H1 (cell line): ENCODE measurements at regions of chr2 and their contacts with region 1.

Region 1: GRCh38 chr2:162301151-162301804 is 17.2 kb downstream of the IFIH1 start:
- DNase-seq: no peak
- H3K4me3 ChIP-seq: no peak overlapping the region
- H3K27ac ChIP-seq: no peak overlapping the region
- H3K4me1 ChIP-seq: no peaks in the 10 kb centered on the region
- H3K27me3 ChIP-seq: no peaks in the 10 kb centered on the region
- CTCF ChIP-seq: peak in 2 of 3 experiments; percentile 62 to 72; a peak in 3 of 4 replicates
- EP300 ChIP-seq: no peak
- POLR2A ChIP-seq: no peak
- RAD21 ChIP-seq: peak; percentile 59 to 63

Region 2: DNA sequence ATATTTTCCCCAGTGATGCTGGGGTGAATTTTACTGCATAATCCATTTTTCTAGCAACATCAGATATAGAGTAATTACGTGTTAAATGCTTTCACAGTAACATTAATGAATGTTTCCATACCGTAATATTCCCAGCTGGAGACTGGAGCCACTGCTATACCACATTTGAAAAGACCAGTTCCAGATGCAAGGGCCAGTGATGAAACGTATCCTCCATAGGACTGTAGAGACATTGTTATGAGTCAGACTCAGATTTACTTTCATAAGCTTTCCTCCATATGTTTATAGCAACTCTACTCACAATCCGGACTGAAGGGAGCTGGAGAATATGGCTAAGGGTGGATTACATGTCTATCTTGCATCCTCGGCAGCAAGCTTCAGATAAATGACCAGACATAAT is 126.5 kb before region 1 on chr2:
- CTCF ChIA-PET with region 1: interaction called, 12 read pairs
- POLR2A ChIA-PET with region 1: no interaction called
- DNase-seq: no peak
- H3K4me3 ChIP-seq: no peak overlapping the region
- H3K27ac ChIP-seq: no peak overlapping the region
- H3K4me1 ChIP-seq: peaks cover 0 to 3% (median 1%) of the 10 kb centered on the region in 4 experiments; a peak in 2 of 7 replicates
- H3K27me3 ChIP-seq: peaks cover 0 to 1% (median 0%) of the 10 kb centered on the region in 4 experiments; a peak in 1 of 7 replicates
- CTCF ChIP-seq: no peak
- EP300 ChIP-seq: no peak
- POLR2A ChIP-seq: no peak
- RAD21 ChIP-seq: no peak

Region 3: GRCh38 chr2:162232671-162233070 is 68.6 kb before region 1 on chr2:
- CTCF ChIA-PET with region 1: interaction called, 13 read pairs
- POLR2A ChIA-PET with region 1: no interaction called
- DNase-seq: no peak
- H3K4me3 ChIP-seq: no peak overlapping the region
- H3K27ac ChIP-seq: no peak overlapping the region
- H3K4me1 ChIP-seq: no peaks in the 10 kb centered on the region
- H3K27me3 ChIP-seq: no peaks in the 10 kb centered on the region
- CTCF ChIP-seq: no peak
- EP300 ChIP-seq: no peak
- POLR2A ChIP-seq: no peak
- RAD21 ChIP-seq: no peak

Region 4: DNA sequence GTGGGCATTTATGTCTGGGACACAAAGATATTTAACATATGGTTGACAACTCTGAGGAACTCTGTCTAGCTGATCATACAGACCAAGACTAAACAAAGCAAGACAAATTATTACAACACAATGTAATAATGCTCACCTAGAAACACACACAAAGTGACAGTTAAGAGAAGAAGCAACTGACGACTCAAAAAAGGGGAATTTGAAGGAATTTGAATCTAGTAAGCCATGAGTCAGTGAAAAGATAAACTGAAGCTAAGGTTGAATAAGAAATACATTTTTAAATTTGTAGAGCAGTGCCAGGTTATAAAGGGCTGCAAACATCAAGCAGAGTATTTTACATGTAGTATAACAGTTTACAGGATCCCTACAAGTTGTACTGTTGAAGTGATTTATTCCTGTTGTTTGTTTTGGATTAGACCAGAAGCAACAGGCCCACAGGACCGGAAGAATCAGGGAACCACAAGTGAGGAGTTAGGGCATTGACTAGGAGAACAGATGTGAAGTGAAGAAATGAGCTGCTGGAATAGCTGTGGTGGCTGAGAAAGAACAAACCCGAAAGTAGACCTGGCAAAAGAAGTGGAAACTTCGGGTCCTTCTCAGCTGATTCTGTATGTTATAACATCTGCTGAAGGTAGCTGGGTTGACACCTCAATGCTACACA is 18.4 kb before region 1 on chr2:
- CTCF ChIA-PET with region 1: interaction called, 55 read pairs
- POLR2A ChIA-PET with region 1: no interaction called
- DNase-seq: no peak
- H3K4me3 ChIP-seq: no peak overlapping the region
- H3K27ac ChIP-seq: no peak overlapping the region
- H3K4me1 ChIP-seq: no peaks in the 10 kb centered on the region
- H3K27me3 ChIP-seq: no peaks in the 10 kb centered on the region
- CTCF ChIP-seq: no peak
- EP300 ChIP-seq: no peak
- POLR2A ChIP-seq: no peak
- RAD21 ChIP-seq: no peak

Region 5: GRCh38 chr2:162327134-162327769 is 26.0 kb after region 1 on chr2:
- CTCF ChIA-PET with region 1: interaction called, 11 read pairs
- POLR2A ChIA-PET with region 1: no interaction called
- DNase-seq: peak in 1 of 2 experiments; percentile 62
- H3K4me3 ChIP-seq: no peak overlapping the region
- H3K27ac ChIP-seq: no peak overlapping the region
- H3K4me1 ChIP-seq: no peaks in the 10 kb centered on the region
- H3K27me3 ChIP-seq: no peaks in the 10 kb centered on the region
- CTCF ChIP-seq: peak; percentile 8 to 56 (median 52)
- EP300 ChIP-seq: no peak
- POLR2A ChIP-seq: no peak
- RAD21 ChIP-seq: peak; percentile 42 to 50

Region 6: DNA sequence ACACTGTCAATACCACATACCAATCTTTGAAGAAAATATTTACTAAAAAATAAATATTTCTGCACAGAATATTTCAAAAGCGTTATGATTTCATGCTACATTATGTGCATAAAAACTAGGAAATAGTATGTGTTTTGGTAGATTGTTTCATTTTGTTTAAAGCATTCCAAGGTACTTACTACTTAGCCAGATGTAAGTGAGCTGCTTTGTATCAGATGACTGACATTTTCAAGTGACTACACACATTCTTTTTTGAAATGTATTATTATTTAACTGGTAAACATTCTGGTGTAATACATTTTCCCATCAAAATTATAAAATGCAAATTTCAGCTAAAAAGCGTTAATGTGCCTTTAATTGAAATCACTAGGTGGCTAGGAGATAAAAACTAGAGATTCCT is 64.1 kb after region 1 on chr2:
- CTCF ChIA-PET with region 1: no interaction called
- POLR2A ChIA-PET with region 1: no interaction called
- DNase-seq: no peak
- H3K4me3 ChIP-seq: no peak overlapping the region
- H3K27ac ChIP-seq: no peak overlapping the region
- H3K4me1 ChIP-seq: no peaks in the 10 kb centered on the region
- H3K27me3 ChIP-seq: peaks cover 0 to 1% (median 0%) of the 10 kb centered on the region in 4 experiments; a peak in 1 of 7 replicates
- CTCF ChIP-seq: no peak
- EP300 ChIP-seq: no peak
- POLR2A ChIP-seq: no peak
- RAD21 ChIP-seq: no peak